Activated naive CD8-positive, alpha-beta T cell treated with anti-CD3 and anti-CD28 coated beads, Interleukin-2, amount 10 ng/mL, durations not matched to agents 7 days and 5 days (primary cell): ENCODE measurements at regions of chr11 and their contacts with region 1.

Region 1: DNA sequence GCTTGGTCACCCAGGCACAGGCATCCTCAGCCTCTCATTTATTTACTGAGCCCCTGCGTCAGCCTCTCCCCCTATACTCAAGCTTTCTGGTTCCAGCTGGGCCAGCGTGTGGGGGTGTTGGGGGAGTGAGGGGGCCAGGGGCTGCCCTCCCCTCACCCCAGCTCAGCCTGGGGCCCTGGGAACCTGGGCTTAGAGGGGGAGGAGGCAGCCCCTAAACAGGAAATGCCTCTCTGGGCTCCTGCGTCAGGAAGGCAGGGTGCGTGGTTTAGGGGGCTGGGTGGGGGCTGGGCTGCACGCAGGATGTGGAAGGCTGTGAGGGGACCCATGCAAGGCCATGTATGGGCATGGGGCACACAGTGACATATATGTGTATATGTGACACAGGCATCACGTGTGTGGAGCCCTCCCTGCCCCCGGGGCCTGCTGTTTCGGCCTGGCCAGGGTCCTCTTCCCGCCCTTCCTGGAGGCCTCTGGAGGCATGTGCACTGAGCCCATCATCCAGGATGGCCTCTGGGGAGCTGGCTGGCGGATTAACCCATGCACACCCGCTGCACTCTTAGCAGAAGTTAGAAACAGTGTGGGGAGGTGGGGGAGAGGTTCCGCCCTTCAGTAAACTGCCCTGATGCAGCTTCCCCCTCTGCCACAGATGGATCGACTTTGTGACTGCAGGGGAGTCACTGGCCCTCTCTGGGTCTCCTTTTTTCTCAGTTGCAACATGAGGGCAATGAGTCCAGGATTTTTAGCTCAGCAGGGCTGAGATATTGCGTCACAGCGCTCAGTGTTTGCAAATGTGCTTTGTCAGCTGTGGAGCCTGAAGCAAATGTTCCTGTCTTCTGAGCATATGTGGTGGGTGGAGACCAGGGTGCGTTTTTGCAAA is 1.1 kb upstream of the CD248 start:
- DNase-seq: peak; percentile 79
- ATAC-seq: peak; percentile 71
- H3K4me3 Mint-ChIP-seq: peak overlapping the region; percentile 89
- H3K27ac Mint-ChIP-seq: peak overlapping the region; percentile 100
- H3K4me1 Mint-ChIP-seq: peaks cover 51% of the 10 kb centered on the region
- H3K27me3 Mint-ChIP-seq: no peaks in the 10 kb centered on the region

Region 2: DNA sequence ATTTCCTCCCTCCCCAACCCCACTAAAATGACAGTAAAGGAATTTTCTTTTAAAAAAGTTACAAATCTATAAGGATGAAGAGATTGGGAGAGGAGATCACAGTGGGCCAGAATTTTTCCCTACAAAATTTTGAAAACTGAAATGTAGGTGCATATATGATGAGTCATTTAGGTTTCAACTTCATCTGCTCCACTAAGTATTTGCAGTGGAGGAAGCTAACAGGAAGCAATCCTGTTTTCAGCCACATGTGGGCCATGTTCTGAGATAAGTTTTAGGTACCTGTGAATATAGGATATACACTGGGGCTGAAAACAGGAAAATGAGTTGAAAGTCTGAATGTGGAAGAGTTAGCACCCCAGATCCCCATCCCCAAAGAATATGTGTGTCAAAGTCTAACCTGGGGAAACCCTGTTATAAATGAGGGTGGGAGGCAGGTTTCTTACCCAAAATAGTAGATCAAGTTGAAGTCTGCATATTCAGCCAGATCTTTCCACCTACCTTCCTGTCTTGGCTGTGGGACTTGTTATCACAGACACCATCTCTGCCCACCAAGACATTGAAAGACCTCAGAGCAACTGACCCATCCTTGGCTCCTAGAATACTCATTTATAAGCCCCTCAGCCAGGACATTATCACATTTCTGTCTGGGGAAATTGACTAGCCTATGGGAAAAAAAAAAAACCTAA is 160.6 kb before region 1 on chr11:
- POLR2A ChIA-PET with region 1: no interaction called
- DNase-seq: no peak
- ATAC-seq: no peak
- H3K4me3 Mint-ChIP-seq: no peak overlapping the region
- H3K27ac Mint-ChIP-seq: peak overlapping the region; percentile 4
- H3K4me1 Mint-ChIP-seq: peaks cover 17% of the 10 kb centered on the region
- H3K27me3 Mint-ChIP-seq: no peaks in the 10 kb centered on the region

Region 3: GRCh38 chr11:66302656-66303055 is 15.3 kb before region 1 on chr11:
- POLR2A ChIA-PET with region 1: no interaction called
- DNase-seq: no peak
- ATAC-seq: no peak
- H3K4me3 Mint-ChIP-seq: no peak overlapping the region
- H3K27ac Mint-ChIP-seq: no peak overlapping the region
- H3K4me1 Mint-ChIP-seq: no peaks in the 10 kb centered on the region
- H3K27me3 Mint-ChIP-seq: peaks cover 4% of the 10 kb centered on the region

Region 4: DNA sequence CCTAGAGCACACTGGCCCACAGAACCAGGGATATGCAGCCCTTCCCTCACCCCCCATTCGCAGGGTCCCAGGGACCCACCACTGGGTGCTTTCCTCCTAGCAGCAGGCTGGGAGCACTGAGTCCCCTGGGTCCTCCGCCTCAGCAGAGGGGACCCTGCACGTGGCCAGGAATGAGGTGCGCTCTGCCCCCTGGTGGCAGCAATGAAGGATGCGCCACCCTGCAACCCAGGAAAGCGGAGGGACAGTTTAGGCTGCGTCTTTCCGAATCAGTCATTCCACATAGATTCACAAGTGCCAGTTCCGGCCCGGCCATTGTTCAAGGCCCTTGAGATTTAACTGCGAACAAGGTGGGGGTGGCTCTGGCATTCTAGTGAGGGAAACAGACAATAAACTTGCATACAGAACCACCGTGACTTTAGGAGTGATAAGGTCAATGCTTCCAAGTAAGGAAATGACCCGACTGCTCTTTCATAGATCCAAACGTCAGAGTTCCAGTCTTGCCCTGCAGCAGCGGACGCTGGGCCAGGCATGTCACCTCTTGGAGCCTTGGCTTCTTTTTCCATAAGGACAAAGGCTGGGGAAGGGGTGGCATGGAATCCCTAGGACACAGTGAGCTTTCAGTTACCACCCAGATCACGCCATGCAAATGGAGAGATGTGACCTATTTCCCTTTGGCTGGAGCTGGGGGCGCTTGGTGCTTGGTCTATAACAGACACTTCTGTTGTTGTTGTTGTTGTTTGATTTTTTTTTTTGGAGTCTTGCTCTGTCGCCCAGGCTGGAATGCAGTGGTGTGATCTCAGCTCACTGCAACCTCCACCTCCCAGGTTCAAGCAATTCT is 10.6 kb after region 1 on chr11:
- POLR2A ChIA-PET with region 1: interaction called, 215 read pairs
- DNase-seq: peak; percentile 85
- ATAC-seq: peak; percentile 59
- H3K4me3 Mint-ChIP-seq: peak overlapping the region; percentile 26
- H3K27ac Mint-ChIP-seq: peak overlapping the region; percentile 89
- H3K4me1 Mint-ChIP-seq: peaks cover 37% of the 10 kb centered on the region
- H3K27me3 Mint-ChIP-seq: no peaks in the 10 kb centered on the region

Region 5: GRCh38 chr11:66336234-66337102 is 18.5 kb after region 1 on chr11 and contains the start of gene RIN1:
- POLR2A ChIA-PET with region 1: interaction called, 94 read pairs
- DNase-seq: peak; percentile 77
- ATAC-seq: peak; percentile 76
- H3K4me3 Mint-ChIP-seq: peak within 1 kb of the TSS; percentile 70
- H3K27ac Mint-ChIP-seq: peak within 1 kb of the TSS; percentile 79
- H3K4me1 Mint-ChIP-seq: peaks cover 26% of the 10 kb centered on the region
- H3K27me3 Mint-ChIP-seq: no peaks in the 10 kb centered on the region
- total RNA-seq, gene RIN1: 3.0 to 5.7 TPM

Region 6: DNA sequence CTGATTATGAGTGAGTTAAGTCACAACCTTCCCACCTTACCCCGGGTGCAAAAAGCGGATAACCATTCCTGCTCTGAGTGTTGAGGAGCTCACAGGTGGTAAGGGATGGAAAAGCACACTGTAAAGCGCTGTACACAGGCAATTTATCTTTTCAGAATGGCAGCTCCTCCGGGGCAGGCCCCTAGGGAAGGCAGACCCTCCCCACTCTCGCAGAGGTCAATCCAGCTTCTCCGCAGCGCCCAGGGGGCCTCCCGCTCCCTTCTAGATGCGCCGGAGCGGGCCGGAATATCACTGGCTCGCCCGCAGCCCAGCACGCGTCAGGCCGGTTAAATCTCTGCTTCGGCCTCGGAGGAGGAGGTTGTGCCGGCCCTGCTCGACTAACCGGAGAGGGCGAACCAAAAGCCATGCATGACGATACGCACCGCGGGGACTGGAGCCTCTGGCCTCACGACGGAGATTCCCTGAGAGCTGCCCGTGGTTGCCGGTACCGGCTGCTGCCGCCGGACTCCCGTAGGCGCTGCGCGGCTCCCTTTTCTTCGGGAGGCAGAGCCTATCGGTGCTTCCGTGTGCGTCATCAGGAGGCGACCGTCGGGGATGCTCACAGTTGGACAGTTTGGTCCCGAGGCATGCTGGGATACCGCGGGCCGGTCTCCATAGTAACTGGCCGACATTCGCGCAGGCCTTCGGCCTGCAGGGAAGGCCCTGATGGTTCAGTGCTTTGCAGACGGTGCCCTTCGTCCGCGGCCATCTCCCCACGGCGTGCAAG is 26.8 kb after region 1 on chr11 and contains the start of gene BRMS1:
- POLR2A ChIA-PET with region 1: interaction called, 32 read pairs
- DNase-seq: peak; percentile 94
- ATAC-seq: peak; percentile 76
- H3K4me3 Mint-ChIP-seq: peak within 1 kb of the TSS; percentile 90
- H3K27ac Mint-ChIP-seq: peak within 1 kb of the TSS; percentile 91
- H3K4me1 Mint-ChIP-seq: peaks cover 35% of the 10 kb centered on the region
- H3K27me3 Mint-ChIP-seq: peaks cover 2% of the 10 kb centered on the region
- total RNA-seq, gene BRMS1: 45.4 to 47.8 TPM

Region 7: GRCh38 chr11:66607126-66607834 is 289.3 kb after region 1 on chr11:
- POLR2A ChIA-PET with region 1: no interaction called
- DNase-seq: no peak
- ATAC-seq: no peak
- H3K4me3 Mint-ChIP-seq: no peak overlapping the region
- H3K27ac Mint-ChIP-seq: no peak overlapping the region
- H3K4me1 Mint-ChIP-seq: peaks cover 9% of the 10 kb centered on the region
- H3K27me3 Mint-ChIP-seq: no peaks in the 10 kb centered on the region